ENCODE measurements at regions of chr21 and their contacts with region 1.

Region 1: DNA sequence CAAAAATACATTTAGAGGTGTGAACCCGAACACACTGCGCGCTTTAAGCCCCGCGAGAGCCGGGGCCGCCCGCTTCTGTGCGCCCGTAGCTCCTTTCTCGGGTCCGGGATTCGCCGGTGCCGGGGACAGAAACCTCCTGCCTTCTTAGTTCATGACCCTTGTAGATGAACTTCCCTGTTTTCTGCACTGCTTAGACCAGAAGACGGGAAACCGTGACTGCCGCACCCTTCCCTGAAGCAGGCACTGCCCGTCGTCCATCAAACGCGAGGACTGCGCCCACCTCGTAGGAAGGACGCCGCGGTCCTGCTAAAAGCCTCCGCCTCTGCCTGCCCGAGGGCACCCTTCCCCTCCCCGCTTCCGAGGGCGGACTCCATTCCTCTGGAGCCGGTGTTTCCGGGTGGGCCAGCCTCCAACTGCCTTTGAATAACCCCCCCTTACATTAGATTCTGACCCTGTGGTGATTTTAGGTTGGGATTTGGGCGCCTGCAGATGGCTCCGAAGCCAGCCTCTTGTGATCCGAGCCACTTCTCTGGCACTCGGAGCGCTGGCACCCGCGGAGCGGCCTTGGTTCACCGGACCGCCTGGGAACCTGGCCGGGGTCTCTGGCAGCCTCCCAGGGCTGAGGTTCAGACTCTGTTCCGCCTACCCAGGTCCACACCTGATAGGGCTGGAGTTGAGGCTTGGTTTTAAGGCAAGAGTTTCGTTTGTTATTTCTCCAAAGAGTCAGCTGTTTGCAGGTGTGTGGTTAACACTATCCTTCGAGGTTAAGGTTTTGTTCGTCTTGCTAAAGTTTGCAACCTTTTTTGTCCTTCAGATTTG is 1.2 kb upstream of the PTTG1IP start:
- DNase-seq: peak; percentile 87

Region 2: GRCh38 chr21:44801468-44802395 is 73.0 kb before region 1 on chr21 and contains the start of gene UBE2G2:
- intact Hi-C with region 1: loop called (anchors 1 kb)
- DNase-seq: peak; percentile 92
- total RNA-seq, gene UBE2G2: 69.7 TPM

Region 3: GRCh38 chr21:44817506-44817880 is 57.2 kb before region 1 on chr21:
- intact Hi-C with region 1: loop called (anchors 2 kb)
- DNase-seq: peak; percentile 97

Region 4: DNA sequence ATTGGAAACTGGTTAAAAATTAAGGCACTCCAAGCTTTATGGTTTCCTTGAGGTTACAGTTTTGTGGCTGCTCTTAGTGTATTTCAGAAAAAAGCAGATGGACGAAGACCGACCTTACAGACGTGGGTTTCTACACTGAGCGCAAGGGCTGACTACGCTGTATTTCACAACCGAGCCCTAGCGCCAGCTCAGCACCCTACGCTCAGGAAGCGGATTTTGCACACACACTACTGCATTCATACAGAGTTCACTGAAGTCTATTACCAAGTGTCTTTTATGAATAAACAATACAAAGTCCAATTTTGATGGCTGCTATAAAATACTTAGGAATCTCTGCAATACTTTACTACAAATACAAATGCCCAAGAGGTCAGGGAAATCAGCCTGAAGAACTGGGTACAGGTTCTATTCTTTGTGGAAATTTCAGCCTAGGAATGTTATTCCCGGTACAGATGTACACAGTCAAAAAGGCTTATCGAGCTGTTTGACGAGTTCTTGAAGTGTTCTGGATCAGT is 25.0 kb before region 1 on chr21:
- intact Hi-C with region 1: loop called (anchors 2 kb)
- DNase-seq: no peak

Region 5: DNA sequence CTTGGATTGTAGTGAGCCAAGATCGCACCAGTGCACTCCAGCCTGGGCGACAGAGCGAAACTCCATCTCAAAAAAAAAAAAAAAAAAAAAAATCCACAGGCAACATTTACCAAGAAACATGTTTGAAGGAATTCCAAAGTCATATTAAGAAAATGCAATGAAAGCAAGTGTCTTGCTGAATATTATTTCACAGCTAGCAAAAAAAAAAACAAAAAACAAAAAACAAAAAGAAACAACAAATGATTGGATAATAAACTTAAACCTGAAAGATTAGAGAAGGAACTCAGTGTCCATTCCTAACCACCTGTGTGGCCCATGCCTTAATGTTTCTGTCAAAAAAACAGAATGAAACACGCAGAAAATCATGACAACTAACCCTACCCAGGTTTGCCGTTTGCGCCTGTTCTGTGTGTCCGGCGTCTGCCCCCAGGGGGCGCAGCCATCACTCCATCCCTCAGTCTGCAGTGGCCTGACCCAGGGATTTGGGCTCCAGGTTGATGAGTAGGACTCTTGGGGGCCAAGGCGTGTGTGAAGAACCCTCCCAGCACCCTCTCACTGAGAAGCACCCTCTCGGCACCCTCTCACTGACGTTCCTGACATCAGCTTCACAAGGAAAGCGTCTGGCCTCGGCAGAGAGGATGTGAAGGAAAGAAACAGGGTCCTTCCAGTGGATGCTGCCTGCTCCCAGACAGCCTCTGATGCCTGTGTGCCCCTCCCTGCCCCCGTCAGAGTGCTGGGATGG is 18.0 kb after region 1 on chr21:
- intact Hi-C with region 1: no loop called
- DNase-seq: peak; percentile 87

Region 6: DNA sequence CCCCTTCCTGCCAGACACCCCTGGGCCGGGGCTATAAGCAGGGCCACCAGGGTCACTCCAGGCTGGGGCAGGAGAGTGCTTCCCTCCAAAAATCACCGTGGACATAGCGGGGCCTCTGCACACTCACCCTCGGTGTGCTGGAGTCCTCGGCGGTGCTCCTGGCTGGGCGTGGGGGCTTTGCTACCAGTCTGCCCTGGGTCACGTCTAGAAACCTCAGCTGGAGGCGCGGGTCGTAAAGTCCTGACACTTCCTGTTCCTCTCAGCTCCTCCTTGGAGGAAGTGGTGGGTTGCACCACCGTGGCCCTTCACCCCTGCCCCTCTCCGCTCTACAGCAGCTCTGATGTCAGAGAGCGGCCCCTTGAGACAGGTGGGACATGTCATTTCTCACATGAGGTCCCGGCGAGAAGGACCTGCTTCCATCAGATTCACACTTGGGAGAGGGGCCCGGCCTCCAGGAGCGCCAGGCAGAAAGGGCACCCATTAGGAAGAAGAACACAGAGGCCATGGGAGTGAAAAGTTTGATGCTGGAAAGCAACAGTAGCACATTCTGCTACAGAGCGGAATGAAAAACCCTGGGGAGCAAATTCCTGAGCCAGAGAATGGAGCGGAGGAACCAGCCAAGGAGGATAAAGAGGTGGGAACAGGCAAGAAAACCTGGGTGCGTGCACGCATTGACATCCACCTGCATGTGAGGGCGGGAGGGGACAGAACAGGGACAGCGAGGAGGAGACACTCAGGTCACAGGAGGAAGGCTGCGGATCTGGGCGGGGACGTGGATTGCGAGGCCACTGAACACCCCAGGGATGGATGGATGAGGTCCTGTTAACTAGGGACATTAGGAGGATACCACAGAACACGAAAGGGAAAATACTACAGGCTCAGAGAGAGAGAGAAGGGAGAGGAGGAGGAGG is 46.2 kb after region 1 on chr21 and contains the start of gene ITGB2:
- intact Hi-C with region 1: no loop called
- DNase-seq: peak; percentile 88
- total RNA-seq, gene ITGB2: 11.5 TPM

Region 7: DNA sequence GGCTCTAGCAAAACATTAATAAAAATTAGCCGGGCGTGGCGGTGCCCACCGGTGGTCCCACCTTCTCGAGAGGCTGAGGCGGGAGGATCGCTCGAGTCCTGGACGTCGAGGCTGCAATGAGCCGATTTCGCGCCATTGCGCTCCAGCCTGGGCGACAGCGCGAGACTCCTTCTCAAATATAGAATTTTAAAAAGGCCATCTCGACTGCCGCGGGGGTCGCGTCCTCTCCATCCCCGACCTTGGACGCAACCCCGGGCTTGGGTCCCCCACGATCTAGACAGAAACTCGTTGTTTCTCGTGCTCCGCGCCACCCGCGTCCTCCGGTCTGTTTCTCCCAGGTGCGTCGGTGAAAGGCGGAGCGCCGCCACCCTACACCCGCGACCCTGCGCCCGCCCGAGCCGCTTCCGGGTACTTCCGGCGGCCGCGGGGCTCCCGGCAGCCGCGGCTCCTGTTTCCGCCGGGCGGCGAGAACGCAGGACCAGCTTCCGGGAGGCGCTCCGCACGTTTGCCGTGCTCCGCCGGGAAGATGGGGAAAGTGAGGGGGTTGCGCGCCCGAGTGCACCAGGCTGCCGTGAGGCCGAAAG is 64.9 kb after region 1 on chr21 and contains the start of gene SLX9:
- intact Hi-C with region 1: no loop called
- DNase-seq: peak; percentile 85
- total RNA-seq, gene SLX9: 35.8 TPM

Measured in cardiac septum (tissue), 1 donor.